ENCODE measurements at regions of chr16 and their contacts with region 1.

Region 1: DNA sequence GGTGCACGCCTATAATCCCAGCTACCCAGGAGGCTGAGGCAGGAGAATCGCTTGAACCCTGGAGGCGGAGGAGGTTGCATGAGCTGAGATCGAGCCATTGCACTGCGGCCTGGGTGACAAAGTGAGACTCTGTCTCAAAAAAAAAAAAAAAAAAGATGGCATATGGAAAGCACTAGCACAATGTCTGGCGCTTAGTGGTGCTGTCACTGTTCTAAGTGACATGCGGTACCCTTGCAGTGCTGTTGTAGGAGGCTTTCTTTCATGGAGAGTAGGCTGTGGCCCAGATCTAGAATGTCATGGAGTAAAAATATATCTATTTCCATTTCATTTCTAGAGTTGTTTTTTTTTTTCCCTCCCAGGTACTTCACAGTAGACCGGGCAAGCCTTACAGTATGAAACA is 14.6 kb upstream of the METTL9 start:
- DNase-seq: no peak
- ATAC-seq: no peak
- H3K4me3 ChIP-seq: no peak overlapping the region
- H3K27ac ChIP-seq: no peak overlapping the region
- H3K4me1 ChIP-seq: no peaks in the 10 kb centered on the region
- H3K27me3 ChIP-seq: no peaks in the 10 kb centered on the region
- CTCF ChIP-seq: no peak

Region 2: GRCh38 chr16:21646721-21647561 is 62.1 kb after region 1 on chr16:
- intact Hi-C with region 1: loop called in 2 of 3 experiments (anchors 5 to 10 kb)
- DNase-seq: no peak
- ATAC-seq: peak in 1 of 4 donors; percentile 14
- H3K4me3 ChIP-seq: no peak overlapping the region
- H3K27ac ChIP-seq: no peak overlapping the region
- H3K4me1 ChIP-seq: no peaks in the 10 kb centered on the region
- H3K27me3 ChIP-seq: no peaks in the 10 kb centered on the region
- CTCF ChIP-seq: no peak

Region 3: DNA sequence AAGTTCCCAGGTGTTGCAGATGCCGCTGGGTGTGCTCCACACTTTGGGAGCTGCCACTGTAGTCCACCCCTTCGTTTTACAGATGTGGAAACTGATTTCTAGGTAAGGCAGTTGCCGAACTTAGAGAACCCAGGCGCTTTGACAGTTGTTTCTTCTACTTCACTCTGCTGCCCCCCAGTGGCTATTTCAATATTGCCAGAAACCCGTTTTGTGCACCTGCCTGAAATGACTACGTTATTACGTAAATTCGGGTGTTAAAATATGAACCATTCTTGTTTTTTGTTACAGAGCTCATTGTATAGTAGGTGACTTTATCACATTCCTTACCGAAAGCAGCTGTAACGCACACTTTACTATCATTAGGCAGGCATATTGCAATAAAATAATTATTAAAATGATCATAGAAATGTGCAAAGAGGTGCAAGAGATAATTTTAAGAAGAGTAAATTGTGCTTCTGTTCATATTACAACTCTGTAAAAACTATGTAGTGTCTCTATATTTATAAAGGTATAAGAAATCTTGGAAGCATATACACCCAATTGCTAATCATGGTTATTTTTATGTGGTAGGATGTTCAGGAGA is 123.8 kb after region 1 on chr16:
- intact Hi-C with region 1: loop called in 2 of 3 experiments (anchors 10 kb)
- DNase-seq: peak in 5 of 6 donors; percentile 44 to 78 (median 67)
- ATAC-seq: peak in 3 of 4 donors; percentile 79 to 86 (median 80)
- H3K4me3 ChIP-seq: no peak overlapping the region
- H3K27ac ChIP-seq: no peak overlapping the region
- H3K4me1 ChIP-seq: no peaks in the 10 kb centered on the region
- H3K27me3 ChIP-seq: no peaks in the 10 kb centered on the region
- CTCF ChIP-seq: peak; percentile 53 to 90 (median 76)

Region 4: DNA sequence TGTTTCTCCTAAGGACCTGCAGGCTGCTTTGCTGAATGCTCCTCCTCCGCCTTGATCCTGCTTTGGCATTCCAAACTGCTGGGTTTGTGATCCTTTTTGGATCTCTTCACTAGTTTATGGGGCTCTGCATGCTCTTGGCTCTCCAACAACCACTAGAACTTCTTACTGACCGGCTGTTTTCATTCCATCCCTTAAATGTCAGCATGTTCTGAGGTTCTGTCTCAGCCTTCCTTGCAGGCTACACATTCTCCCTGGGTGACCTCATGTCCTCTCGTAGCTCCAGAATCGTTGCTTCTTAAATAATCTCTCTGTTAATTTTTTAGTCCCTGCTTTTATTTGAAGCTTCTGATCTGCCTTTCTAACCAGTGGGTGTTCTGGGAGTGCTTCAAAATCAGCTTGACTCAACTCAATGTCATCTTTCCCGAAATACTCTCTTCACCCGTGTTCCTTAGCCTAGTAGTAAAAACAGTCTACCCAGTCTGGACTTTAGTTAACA is 1110.1 kb after region 1 on chr16:
- intact Hi-C with region 1: loop called in 2 of 3 experiments (anchors 2 to 5 kb)
- DNase-seq: no peak
- ATAC-seq: peak in 2 of 4 donors; percentile 35 to 39
- H3K4me3 ChIP-seq: no peak overlapping the region
- H3K27ac ChIP-seq: no peak overlapping the region
- H3K4me1 ChIP-seq: no peaks in the 10 kb centered on the region
- H3K27me3 ChIP-seq: no peaks in the 10 kb centered on the region
- CTCF ChIP-seq: no peak